Colonic mucosa (tissue), 4 donors: ENCODE measurements at regions of chr5 and their contacts with region 1.

Region 1: GRCh38 chr5:6745706-6746222 is 32.5 kb downstream of the TENT4A start:
- DNase-seq: no peak
- H3K4me3 ChIP-seq: no peak overlapping the region
- H3K27ac ChIP-seq: no peak overlapping the region
- H3K4me1 ChIP-seq: no peaks in the 10 kb centered on the region
- H3K27me3 ChIP-seq: no peaks in the 10 kb centered on the region
- CTCF ChIP-seq: peak; percentile 70

Region 2: GRCh38 chr5:5886812-5887486 is 858.8 kb before region 1 on chr5:
- intact Hi-C with region 1: loop called (anchors 10 kb)
- DNase-seq: peak; percentile 25
- H3K4me3 ChIP-seq: no peak overlapping the region
- H3K27ac ChIP-seq: no peak overlapping the region
- H3K4me1 ChIP-seq: no peaks in the 10 kb centered on the region
- H3K27me3 ChIP-seq: no peaks in the 10 kb centered on the region
- CTCF ChIP-seq: peak; percentile 71

Region 3: DNA sequence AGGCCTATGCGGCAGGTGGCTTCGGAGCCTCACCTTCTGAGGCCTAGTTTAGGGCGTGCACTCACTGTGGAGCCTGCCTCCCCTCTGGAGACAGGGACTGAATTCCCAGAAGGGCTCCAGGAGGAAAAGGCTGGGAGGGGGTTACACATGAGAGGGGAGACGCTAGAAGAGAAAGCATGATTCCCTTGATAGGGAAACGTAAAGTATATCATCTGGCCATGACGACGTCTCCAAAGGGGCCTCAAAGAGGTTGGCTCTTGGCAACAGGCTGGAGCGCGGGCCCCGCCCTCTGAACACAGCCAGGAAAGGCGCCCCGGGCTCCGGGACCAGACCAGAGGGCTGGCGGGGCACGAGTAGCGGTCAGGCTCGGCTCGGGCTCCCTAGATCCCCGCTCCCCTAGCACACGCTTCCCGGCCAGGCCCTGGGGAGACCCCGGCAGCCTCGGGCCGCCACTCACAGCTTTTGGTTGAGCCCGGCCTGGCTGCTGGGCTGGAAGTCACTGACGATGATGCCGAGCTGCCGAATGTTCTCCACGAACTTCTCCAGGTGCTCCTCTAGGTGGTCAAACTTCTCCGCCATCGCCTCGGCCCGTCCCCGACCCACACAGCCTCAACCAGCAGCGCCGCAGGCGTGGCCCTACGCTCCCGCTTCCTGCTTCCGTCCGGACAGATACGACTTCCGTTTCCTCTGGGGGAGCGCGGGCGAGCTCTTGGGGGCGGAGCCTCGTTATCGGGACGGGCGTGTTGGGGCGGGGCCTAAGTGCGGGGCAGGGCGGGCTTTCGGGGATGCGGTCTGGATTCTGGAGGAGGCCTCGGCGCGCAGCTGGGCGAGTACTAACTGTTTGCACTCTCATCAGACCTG is 367.6 kb before region 1 on chr5 and contains the start of gene MED10:
- intact Hi-C with region 1: loop called (anchors 10 kb)
- DNase-seq: peak; percentile 97
- H3K4me3 ChIP-seq: peak within 1 kb of the TSS; percentile 100
- H3K27ac ChIP-seq: peak within 1 kb of the TSS; percentile 86
- H3K4me1 ChIP-seq: no peaks in the 10 kb centered on the region
- H3K27me3 ChIP-seq: no peaks in the 10 kb centered on the region
- CTCF ChIP-seq: no peak
- total RNA-seq, gene MED10: 25.0 to 27.3 TPM

Region 4: DNA sequence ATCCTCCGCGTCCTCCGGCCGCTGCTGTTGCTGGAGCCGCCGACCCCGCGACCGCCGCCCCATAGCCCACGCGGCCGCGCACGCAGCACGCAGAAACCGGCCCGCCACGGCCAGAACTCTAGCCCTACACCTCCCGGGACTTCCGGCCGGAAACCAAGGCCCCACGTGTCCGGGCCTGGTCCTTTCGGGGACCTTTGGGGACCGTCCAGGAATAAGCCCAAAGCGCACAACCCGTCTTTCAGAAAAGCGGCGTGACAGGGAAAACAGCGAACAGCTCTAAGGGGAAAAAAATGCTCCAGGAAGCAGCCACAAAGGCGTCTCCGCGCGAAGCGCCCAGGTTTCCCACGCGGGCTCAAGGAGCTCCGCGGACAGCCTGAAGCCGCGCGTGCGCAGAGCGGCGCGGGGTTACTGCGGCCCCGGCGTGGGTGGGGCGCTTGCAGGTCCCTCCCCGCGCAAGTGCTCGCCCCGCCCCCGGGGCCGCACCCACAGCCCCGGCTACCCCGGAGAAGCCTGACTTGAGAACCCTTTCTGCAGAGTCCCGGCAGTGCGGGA is 112.8 kb before region 1 on chr5 and contains the starts of genes NSUN2 and SRD5A1:
- intact Hi-C with region 1: loop called (anchors 5 kb)
- DNase-seq: peak; percentile 93
- H3K4me3 ChIP-seq: peak within 1 kb of the TSS; percentile 99
- H3K27ac ChIP-seq: peak within 1 kb of the TSS; percentile 81
- H3K4me1 ChIP-seq: peaks cover 12% of the 10 kb centered on the region
- H3K27me3 ChIP-seq: no peaks in the 10 kb centered on the region
- CTCF ChIP-seq: no peak
- total RNA-seq, gene NSUN2: 46.9 to 69.9 TPM
- total RNA-seq, gene SRD5A1: 15.9 to 17.4 TPM